Esophagus muscularis mucosa (tissue), 4 donors: ENCODE measurements at regions of chr1 and their contacts with region 1.

Region 1: DNA sequence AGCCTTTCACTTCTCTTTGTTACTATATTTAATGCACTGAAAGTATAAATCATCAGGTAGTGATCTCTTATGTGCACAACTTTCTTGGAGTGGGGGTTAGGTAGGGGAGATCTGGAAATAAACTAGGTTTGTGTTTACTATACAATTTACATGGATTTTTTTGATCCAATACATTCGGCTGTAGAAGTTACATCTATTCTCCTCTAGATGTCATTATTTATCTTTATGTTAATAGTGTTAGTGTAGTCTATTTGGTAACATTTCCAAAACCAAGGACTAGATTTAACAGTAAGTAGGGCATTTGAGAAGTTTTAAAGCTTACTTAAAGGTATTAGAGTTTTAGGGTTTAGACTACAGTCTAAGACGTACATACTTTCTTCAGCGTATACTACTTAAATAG is 5.4 kb downstream of the VPS45 start:
- DNase-seq: no peak
- H3K4me3 ChIP-seq: no peak overlapping the region
- H3K27ac ChIP-seq: no peak overlapping the region
- H3K4me1 ChIP-seq: peaks cover 8 to 31% (median 25%) of the 10 kb centered on the region in 4 donors
- H3K27me3 ChIP-seq: no peaks in the 10 kb centered on the region
- CTCF ChIP-seq: peak; percentile 44 to 60 (median 51)
- EP300 ChIP-seq: no peak
- POLR2A ChIP-seq: no peak

Region 2: GRCh38 chr1:150149271-150150132 is 76.5 kb after region 1 on chr1 and contains the start of gene PLEKHO1:
- intact Hi-C with region 1: loop called (anchors 5 kb)
- DNase-seq: peak; percentile 97
- H3K4me3 ChIP-seq: peak within 1 kb of the TSS; percentile 76 to 95 (median 92)
- H3K27ac ChIP-seq: peak within 1 kb of the TSS; percentile 93 to 99 (median 99)
- H3K4me1 ChIP-seq: peaks cover 19 to 57% (median 49%) of the 10 kb centered on the region in 4 donors
- H3K27me3 ChIP-seq: no peaks in the 10 kb centered on the region
- CTCF ChIP-seq: no peak
- EP300 ChIP-seq: no peak
- POLR2A ChIP-seq: peak; percentile 80
- total RNA-seq, gene PLEKHO1: 294 to 426 (median 337) TPM

Region 3: DNA sequence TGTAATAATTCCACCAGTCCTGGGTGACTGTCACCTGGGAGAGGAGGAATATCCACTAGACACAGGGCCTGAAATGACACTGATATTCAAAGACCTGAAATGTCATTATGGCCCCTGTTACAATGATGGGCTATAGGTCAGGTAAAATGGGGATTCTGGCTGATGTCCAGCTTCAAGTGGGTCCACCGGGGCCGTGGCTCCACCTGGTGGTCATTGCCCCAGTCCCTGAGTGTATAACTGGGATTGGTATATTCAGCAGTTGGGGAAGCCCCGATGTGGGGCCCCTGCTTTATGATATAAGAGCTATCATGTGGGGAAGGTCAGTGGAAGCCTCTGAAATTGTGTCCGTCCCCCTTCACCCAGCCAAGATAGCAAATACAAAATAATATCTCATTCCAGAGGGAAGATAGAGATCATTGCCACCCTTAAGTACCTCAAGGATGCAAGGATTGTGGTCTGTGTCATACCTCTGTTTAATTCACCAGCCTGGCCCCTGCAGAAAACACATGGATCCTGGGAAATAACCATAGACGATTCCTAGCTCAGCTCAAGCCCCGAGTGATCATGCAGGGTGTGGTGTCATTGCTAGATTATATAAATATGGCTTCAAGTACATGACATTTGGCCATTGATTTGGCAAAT is 96.1 kb after region 1 on chr1:
- intact Hi-C with region 1: loop called (anchors 5 kb)
- DNase-seq: no peak
- H3K4me3 ChIP-seq: no peak overlapping the region
- H3K27ac ChIP-seq: no peak overlapping the region
- H3K4me1 ChIP-seq: peaks cover 0 to 29% (median 24%) of the 10 kb centered on the region in 4 donors
- H3K27me3 ChIP-seq: no peaks in the 10 kb centered on the region
- CTCF ChIP-seq: peak; percentile 81 to 94 (median 89)
- EP300 ChIP-seq: no peak
- POLR2A ChIP-seq: no peak